Activated T-helper 2 cell treated with anti-CD3 and anti-CD28 coated beads, Interferon-gamma antibody, Interleukin-2, Interleukin-4, amounts not matched to agents 10 μg/mL and 5 μg/mL and 100 μg/mL, durations not matched to agents 14 hours and 24 hours and 36 hours (primary cell): ENCODE measurements at regions of chr12 and their contacts with region 1.

Region 1: GRCh38 chr12:76348079-76348901 is at the start of gene BBS10:
- DNase-seq: peak; percentile 80
- H3K4me3 Mint-ChIP-seq: peak within 1 kb of the TSS; percentile 89
- H3K27ac Mint-ChIP-seq: peak within 1 kb of the TSS; percentile 84
- H3K4me1 Mint-ChIP-seq: peaks cover 21% of the 10 kb centered on the region
- H3K27me3 Mint-ChIP-seq: no peaks in the 10 kb centered on the region
- total RNA-seq, gene BBS10: 3.9 and 4.1 TPM in 2 replicates

Region 2: GRCh38 chr12:75511116-75512048 is 836.9 kb before region 1 on chr12 and contains the start of gene KRR1:
- intact Hi-C with region 1: loop called (anchors 5 kb)
- DNase-seq: peak; percentile 91
- H3K4me3 Mint-ChIP-seq: peak within 1 kb of the TSS; percentile 96
- H3K27ac Mint-ChIP-seq: peak within 1 kb of the TSS; percentile 98
- H3K4me1 Mint-ChIP-seq: peaks cover 30% of the 10 kb centered on the region
- H3K27me3 Mint-ChIP-seq: no peaks in the 10 kb centered on the region
- total RNA-seq, gene KRR1: 114 and 119 TPM in 2 replicates

Region 3: DNA sequence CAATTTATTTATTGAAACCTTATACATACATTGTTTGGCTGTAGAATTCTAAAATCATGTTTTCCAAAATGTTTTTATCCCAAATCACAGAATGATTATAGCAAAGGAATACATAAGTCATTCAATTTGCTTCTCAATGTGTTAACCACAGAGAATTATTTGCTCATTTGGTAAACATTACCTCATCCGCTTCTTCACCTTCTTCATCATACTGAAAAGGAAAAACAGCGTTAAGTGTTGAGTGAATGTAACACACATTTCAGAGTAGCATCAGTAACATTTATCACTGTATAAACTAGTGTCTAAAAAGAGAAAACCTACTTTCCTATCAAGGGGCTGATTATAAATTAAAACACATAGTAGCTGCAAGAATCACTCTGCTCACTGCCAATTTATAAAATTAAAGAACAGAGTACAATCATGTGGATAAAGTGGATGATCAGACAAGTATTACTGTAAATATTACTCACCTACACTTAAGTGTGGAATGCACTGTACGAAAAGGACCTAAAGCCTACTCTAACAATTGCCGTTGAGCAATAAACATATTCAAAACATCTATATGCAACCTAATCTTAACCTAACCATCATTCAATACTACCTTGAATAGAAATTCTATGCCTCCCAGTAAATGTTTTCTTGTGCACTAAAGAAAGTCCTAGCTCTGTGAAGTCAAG is 298.6 kb before region 1 on chr12:
- intact Hi-C with region 1: loop called (anchors 5 kb)
- DNase-seq: no peak
- H3K4me3 Mint-ChIP-seq: no peak overlapping the region
- H3K27ac Mint-ChIP-seq: no peak overlapping the region
- H3K4me1 Mint-ChIP-seq: no peaks in the 10 kb centered on the region
- H3K27me3 Mint-ChIP-seq: no peaks in the 10 kb centered on the region

Region 4: DNA sequence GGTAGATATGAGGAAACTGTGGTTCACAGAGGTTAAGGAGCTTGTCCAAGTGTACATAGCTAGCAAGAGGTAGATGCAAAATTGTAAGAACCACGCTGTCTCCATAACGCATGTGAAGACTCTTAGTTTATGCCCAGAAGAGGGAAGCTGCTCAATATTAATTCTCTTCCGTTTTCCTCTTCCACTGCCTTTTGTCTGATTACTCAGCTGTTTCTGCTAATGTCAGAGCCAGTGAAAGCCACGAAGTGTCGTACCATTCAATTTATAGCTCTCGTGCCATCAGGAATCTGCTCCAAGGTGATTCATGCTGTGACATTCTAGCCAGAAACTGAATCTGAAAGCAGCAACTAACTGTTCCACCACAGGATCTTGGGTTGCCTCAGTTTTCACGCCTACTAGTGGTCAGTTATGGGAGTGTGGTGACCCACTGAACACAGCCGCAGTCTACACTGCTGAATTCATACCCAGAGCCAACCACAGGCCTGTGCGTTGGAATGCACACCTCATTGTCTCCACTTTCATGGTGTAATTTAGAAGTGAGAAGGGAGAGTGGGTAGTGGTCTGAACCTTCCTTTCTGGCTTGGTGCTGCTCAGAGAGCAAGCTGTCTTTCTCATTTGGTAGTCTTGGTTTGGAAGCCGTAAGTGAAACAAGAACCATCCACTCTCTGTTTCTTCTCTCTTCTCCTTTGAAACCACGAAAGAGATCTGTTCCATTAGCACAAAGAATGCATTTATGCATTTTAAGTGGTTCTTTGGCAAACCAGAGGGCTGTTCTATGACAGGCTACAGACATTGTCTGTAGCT is 189.6 kb before region 1 on chr12:
- intact Hi-C with region 1: loop called (anchors 1 kb)
- DNase-seq: peak; percentile 73
- H3K4me3 Mint-ChIP-seq: peak overlapping the region; percentile 38
- H3K27ac Mint-ChIP-seq: peak overlapping the region; percentile 46
- H3K4me1 Mint-ChIP-seq: peaks cover 30% of the 10 kb centered on the region
- H3K27me3 Mint-ChIP-seq: peaks cover 12% of the 10 kb centered on the region

Region 5: GRCh38 chr12:76277480-76277879 is 70.8 kb before region 1 on chr12:
- intact Hi-C with region 1: loop called (anchors 2 kb)
- DNase-seq: no peak
- H3K4me3 Mint-ChIP-seq: no peak overlapping the region
- H3K27ac Mint-ChIP-seq: no peak overlapping the region
- H3K4me1 Mint-ChIP-seq: peaks cover 14% of the 10 kb centered on the region
- H3K27me3 Mint-ChIP-seq: peaks cover 9% of the 10 kb centered on the region

Region 6: DNA sequence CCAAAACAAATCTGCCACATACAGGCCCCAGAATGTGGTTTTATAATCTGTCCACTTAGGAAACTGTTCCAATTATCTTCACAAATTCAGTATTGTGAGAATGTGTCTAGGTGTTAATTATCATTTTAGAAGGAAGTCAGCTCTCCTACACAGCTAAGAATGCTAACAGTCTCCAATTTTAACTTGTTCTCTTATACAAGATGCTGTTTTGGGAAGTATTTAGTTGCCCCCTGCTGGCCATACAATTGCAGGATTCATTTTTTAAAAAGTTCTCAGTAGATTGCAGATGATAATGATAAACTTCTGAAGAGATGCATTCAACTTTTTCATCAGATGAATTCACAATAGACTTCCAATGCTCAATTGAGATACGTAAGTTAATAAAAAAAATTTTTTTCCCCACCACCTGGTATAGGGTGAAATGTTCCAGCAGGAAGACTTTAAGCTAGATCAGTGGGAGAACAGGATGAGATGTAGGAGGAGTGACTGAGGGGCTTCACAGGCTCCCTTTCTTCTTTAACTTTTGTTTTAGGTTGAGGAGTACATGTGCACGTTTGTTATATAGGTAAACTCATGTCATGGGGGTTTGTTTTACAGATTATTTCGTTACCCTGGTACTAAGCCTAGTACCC is 238.6 kb after region 1 on chr12:
- intact Hi-C with region 1: loop called (anchors 10 kb)
- DNase-seq: no peak
- H3K4me3 Mint-ChIP-seq: no peak overlapping the region
- H3K27ac Mint-ChIP-seq: no peak overlapping the region
- H3K4me1 Mint-ChIP-seq: peaks cover 6% of the 10 kb centered on the region
- H3K27me3 Mint-ChIP-seq: peaks cover 3% of the 10 kb centered on the region